ENCODE measurements at regions of chr11 and their contacts with region 1.

Region 1: GRCh38 chr11:47161134-47161854 is 15.4 kb downstream of the ARFGAP2 start:
- DNase-seq: peak; percentile 89
- H3K4me3 ChIP-seq: no peak overlapping the region
- H3K27ac ChIP-seq: no peak overlapping the region
- H3K4me1 ChIP-seq: no peaks in the 10 kb centered on the region
- H3K27me3 ChIP-seq: no peaks in the 10 kb centered on the region
- CTCF ChIP-seq: peak; percentile 84

Region 2: DNA sequence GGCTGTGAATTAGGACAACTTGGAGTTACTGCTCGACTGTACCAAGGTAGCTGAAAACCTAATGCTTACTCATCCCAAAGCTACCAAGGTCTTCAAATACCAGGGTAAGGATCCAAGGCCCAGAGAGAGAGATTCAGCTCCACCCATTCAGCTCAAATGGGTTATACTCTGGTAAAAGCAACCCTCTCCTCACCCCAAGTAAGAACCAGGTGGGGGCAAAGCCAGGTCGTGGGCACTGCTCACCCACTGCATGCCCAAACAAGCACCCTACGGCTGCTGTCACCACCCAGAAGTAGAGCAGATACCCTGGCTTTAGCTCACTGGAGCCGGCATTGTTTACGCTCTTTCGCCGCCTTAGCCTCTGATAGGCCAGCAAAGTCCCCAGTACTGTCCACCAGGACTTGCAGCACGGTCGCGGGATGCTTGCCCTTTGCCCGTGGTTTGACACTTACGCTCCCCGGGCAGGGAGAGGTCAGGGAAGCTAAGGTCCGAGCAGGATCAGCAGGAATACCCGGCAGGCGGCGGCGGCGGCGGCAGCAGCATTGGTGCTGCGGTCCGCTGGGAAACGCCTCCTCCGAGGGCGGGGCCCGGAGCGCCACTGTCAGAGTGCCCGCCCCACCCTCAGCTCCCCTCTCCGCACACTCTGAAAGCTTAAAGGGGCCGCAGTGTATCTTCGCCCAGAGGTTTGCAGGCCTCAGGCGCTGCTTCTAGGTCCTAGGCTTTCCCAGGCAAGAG is 334.8 kb before region 1 on chr11:
- CTCF ChIA-PET with region 1: no interaction called
- POLR2A ChIA-PET with region 1: no interaction called
- intact Hi-C with region 1: no loop called
- DNase-seq: peak; percentile 97
- H3K4me3 ChIP-seq: peak overlapping the region; percentile 39
- H3K27ac ChIP-seq: peak overlapping the region; percentile 0
- H3K4me1 ChIP-seq: peaks cover 41% of the 10 kb centered on the region
- H3K27me3 ChIP-seq: no peaks in the 10 kb centered on the region
- CTCF ChIP-seq: no peak

Region 3: GRCh38 chr11:46889689-46890475 is 271.4 kb before region 1 on chr11:
- CTCF ChIA-PET with region 1: interaction called, 5 read pairs
- POLR2A ChIA-PET with region 1: no interaction called
- intact Hi-C with region 1: loop called (anchors 1 kb)
- DNase-seq: peak; percentile 92
- H3K4me3 ChIP-seq: no peak overlapping the region
- H3K27ac ChIP-seq: no peak overlapping the region
- H3K4me1 ChIP-seq: no peaks in the 10 kb centered on the region
- H3K27me3 ChIP-seq: no peaks in the 10 kb centered on the region
- CTCF ChIP-seq: peak; percentile 100

Region 4: DNA sequence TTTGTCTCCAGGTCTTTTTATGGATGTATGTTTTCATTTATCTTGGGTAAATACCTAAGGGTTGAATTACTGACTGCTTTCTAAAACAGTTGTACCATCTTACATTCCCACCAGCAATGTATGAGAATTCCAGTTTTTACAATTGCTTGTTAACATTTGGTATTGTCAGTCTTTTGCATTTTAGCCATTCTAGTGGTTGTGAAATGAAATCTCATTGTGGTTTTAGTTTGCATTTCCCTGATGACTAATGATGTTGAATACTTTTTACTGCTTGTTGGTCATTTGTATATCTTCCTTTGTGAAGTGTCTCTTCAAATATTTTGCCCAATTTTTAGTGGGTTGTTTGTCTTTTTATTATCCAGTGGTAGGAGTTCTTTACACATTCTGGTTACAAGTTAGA is 77.4 kb before region 1 on chr11:
- CTCF ChIA-PET with region 1: interaction called, 11 read pairs
- POLR2A ChIA-PET with region 1: no interaction called
- intact Hi-C with region 1: no loop called
- DNase-seq: no peak
- H3K4me3 ChIP-seq: no peak overlapping the region
- H3K27ac ChIP-seq: no peak overlapping the region
- H3K4me1 ChIP-seq: no peaks in the 10 kb centered on the region
- H3K27me3 ChIP-seq: no peaks in the 10 kb centered on the region
- CTCF ChIP-seq: no peak

Region 5: DNA sequence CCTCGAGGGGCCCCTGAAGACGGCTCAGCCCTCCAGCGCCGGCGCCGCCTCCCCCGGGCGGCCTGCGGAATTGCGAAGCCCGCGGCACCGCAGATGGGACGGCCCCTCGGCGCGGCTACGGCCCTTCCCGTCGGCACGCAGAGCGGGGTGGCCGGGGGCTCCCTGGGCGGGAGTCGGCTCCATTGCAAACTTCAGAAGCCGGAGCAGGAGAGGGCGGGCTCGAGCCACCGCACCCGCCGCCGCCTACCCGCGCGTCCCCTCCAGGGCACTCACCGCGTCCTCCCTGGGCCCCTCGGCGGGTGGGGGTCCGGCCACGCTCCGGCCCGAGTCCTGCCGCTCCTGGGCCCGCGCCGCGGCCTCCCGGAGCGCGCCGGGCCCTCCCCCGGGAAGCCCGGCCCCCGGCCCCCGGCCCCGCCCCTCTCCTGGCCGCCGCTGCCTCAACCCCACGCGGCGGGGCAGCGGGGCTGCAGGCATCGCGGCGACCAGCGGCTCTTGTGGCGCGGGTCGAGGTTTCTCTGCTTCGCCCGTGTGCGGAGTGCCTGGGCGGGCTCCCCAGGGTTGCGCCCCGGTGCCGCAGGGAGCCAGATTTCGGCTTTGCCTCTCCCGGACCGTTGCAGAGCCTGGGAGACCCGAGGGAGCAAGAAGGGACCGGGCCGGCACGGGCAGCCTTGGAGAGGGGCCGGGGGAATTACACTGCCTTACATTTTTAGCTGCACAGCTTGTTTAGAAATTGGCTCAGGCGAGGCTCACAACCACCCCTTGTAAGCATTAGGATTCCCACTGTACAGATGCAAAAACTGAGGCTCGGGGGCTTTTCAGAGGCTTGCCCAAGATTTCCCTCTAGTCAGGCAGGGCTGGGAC is 25.0 kb after region 1 on chr11 and contains the start of gene PACSIN3:
- CTCF ChIA-PET with region 1: no interaction called
- POLR2A ChIA-PET with region 1: interaction called, 12 read pairs
- intact Hi-C with region 1: no loop called
- DNase-seq: peak; percentile 78
- H3K4me3 ChIP-seq: peak within 1 kb of the TSS; percentile 58
- H3K27ac ChIP-seq: peak within 1 kb of the TSS; percentile 41
- H3K4me1 ChIP-seq: peaks cover 24% of the 10 kb centered on the region
- H3K27me3 ChIP-seq: no peaks in the 10 kb centered on the region
- CTCF ChIP-seq: 0 out of 2 replicates have a peak, but pooled peaks have one; percentile 15
- total RNA-seq, gene PACSIN3: 32.0 and 50.9 TPM in 2 replicates

Region 6: DNA sequence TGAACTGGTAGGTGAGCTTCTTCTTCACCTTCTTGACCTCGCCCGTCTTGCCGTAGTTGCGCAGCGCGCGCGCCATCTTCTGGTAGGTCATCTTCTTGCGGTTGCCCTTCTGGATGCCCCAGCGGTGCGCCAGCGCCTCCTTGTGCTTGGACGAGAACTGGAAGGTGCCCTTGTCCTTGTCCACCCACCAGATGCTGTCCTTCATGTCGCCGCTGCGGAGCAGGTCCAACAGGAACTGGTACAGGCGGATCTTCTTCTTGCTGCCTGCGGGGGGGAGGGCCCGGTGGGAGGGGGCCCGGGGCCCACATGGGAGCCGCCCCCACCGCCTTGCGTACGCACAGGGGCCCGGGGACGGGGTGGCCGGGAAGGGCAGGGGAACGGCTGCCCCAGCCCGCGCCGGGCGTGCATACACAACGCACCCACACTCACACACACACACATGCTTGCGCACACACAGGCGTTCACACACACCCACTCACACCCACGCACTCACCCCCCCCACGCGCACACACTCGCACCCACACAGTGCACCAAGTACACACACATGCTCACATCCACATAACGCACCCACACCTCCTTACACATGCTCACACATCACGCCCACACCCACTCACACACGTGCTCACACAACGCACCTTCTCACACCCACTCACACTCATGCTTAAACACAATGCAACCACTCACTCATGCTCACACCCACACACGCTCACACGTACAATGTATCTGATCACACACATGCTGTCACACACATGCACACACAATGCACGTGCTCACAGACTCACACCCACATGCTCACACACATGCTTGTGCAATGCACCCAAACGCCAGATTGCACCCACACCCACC is 194.2 kb after region 1 on chr11:
- CTCF ChIA-PET with region 1: interaction called, 4 read pairs
- POLR2A ChIA-PET with region 1: interaction called, 3 read pairs
- intact Hi-C with region 1: loop called (anchors 1 kb)
- DNase-seq: peak; percentile 99
- H3K4me3 ChIP-seq: peak overlapping the region; percentile 50
- H3K27ac ChIP-seq: peak overlapping the region; percentile 18
- H3K4me1 ChIP-seq: peaks cover 5% of the 10 kb centered on the region
- H3K27me3 ChIP-seq: no peaks in the 10 kb centered on the region
- CTCF ChIP-seq: peak; percentile 100

Measured in A673 (cell line).